Endothelial cell of umbilical vein (primary cell): ENCODE measurements at regions of chr2 and their contacts with region 1.

Region 1: GRCh38 chr2:161077367-161078210 is 82.6 kb upstream of the TANK start:
- DNase-seq: peak; percentile 99
- H3K4me3 ChIP-seq: no peak overlapping the region
- H3K27ac ChIP-seq: peak overlapping the region; percentile 99
- H3K4me1 ChIP-seq: peaks cover 37% of the 10 kb centered on the region
- H3K27me3 ChIP-seq: no peaks in the 10 kb centered on the region
- CTCF ChIP-seq: no peak
- POLR2A ChIP-seq: no peak

Region 2: DNA sequence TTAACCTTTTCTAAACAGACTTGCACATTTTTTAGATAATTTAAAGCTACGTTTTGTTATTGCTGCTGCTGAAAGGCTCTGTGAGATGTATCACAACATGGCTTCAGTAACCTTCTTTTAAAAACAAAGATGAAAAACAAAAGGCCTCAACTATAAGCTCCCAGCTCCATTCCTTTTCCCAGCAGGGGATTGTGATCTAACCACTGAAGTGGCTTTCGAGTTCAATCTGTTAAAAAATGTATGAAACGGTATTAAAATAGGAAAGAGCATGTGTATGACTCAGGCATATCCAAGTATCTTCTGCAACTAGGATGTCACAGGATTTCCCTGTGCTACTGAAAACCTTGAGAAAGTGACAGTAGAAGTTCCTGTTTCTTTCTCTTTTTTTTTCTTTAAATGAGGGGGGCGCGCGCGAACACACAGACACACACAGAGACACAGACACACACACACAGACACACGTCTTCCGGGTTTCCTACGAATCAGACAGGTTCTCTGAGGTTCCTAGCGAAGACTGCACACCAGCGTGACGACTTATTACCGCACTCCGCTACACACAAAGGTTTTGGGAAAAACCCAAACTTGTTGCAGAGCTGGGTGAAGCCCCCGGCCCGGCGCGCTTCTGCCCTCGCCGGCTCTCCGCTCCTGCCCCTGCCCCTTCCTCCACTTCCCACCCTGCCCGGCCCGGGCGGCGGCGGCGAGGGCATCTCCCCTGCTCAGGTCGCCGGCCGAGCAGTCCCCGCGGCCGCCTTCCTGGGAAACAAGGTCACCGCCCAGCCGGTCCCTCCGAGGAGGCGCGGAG is 670.8 kb before region 1 on chr2:
- CTCF ChIA-PET with region 1: no interaction called
- POLR2A ChIA-PET with region 1: no interaction called
- dilution Hi-C with region 1: no loop called
- intact Hi-C with region 1: loop called (anchors 10 kb)
- DNase-seq: peak; percentile 77
- H3K4me3 ChIP-seq: peak overlapping the region; percentile 89 to 98 (median 95)
- H3K27ac ChIP-seq: peak overlapping the region; percentile 90
- H3K4me1 ChIP-seq: peaks cover 72% of the 10 kb centered on the region
- H3K27me3 ChIP-seq: no peaks in the 10 kb centered on the region
- CTCF ChIP-seq: no peak
- POLR2A ChIP-seq: peak; percentile 49

Region 3: GRCh38 chr2:161122772-161123530 is 45.4 kb after region 1 on chr2:
- CTCF ChIA-PET with region 1: interaction called, 4 read pairs
- POLR2A ChIA-PET with region 1: no interaction called
- dilution Hi-C with region 1: no loop called
- intact Hi-C with region 1: loop called (anchors 1 kb)
- DNase-seq: peak; percentile 95
- H3K4me3 ChIP-seq: peak overlapping the region in 1 of 3 experiments; percentile 21
- H3K27ac ChIP-seq: peak overlapping the region; percentile 92
- H3K4me1 ChIP-seq: peaks cover 27% of the 10 kb centered on the region
- H3K27me3 ChIP-seq: no peaks in the 10 kb centered on the region
- CTCF ChIP-seq: no peak
- POLR2A ChIP-seq: no peak

Region 4: GRCh38 chr2:161136696-161137324 is 59.2 kb after region 1 on chr2:
- CTCF ChIA-PET with region 1: interaction called, 11 read pairs
- POLR2A ChIA-PET with region 1: interaction called, 7 read pairs
- dilution Hi-C with region 1: no loop called
- intact Hi-C with region 1: loop called (anchors 1 kb)
- DNase-seq: peak; percentile 90
- H3K4me3 ChIP-seq: peak overlapping the region in 2 of 3 experiments; percentile 32 to 78
- H3K27ac ChIP-seq: peak overlapping the region; percentile 88
- H3K4me1 ChIP-seq: peaks cover 45% of the 10 kb centered on the region
- H3K27me3 ChIP-seq: no peaks in the 10 kb centered on the region
- CTCF ChIP-seq: no peak
- POLR2A ChIP-seq: peak; percentile 59

Region 5: DNA sequence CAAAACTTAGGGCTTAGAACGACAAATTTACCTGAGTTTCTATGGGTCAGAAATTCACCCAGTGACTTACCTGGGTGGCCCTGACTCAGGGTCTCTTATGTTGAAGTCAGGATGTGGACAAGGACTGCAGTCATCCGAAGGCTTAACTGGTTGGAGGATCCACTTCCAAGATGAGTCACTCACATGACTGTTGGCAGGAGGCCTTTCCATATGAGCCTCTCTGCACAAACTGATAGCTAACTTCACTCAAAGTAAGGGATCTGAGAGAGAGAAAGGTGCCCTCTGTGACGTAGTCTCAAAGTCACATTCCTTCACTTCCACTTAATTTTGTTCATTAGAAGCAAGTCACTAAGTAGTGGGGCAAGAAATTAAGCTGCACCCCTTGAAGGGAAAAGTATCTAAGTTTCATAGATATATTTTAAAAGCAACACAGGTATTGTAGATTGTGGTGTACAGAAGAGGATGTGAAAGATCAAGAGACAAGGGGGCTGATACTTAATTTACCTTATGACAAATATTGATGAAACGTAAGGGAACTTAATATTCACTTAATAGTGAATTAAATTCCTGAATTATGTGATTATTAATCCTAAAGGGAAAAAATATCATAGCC is 131.0 kb after region 1 on chr2:
- CTCF ChIA-PET with region 1: interaction called, 3 read pairs
- POLR2A ChIA-PET with region 1: no interaction called
- dilution Hi-C with region 1: no loop called
- intact Hi-C with region 1: loop called (anchors 1 kb)
- DNase-seq: peak; percentile 69
- H3K4me3 ChIP-seq: no peak overlapping the region
- H3K27ac ChIP-seq: no peak overlapping the region
- H3K4me1 ChIP-seq: peaks cover 36% of the 10 kb centered on the region
- H3K27me3 ChIP-seq: no peaks in the 10 kb centered on the region
- CTCF ChIP-seq: no peak
- POLR2A ChIP-seq: no peak